PC-9 (cell line): ENCODE measurements at regions of chr12 and their contacts with region 1.

Region 1: GRCh38 chr12:89236748-89237388 is 115.4 kb downstream of the DUSP6 start:
- DNase-seq: peak; percentile 28 to 96
- H3K4me3 ChIP-seq: peak overlapping the region; percentile 26; the same call in 1 of the 2 replicates
- H3K27ac ChIP-seq: peak overlapping the region; percentile 87
- H3K4me1 ChIP-seq: peaks cover 37% of the 10 kb centered on the region
- H3K27me3 ChIP-seq: no peaks in the 10 kb centered on the region
- CTCF ChIP-seq: no peak

Region 2: GRCh38 chr12:89117448-89118034 is 119.3 kb before region 1 on chr12:
- CTCF ChIA-PET with region 1: no interaction called
- POLR2A ChIA-PET with region 1: interaction called, 10 read pairs
- intact Hi-C with region 1: loop called (anchors 1 kb)
- DNase-seq: peak; percentile 84 to 95
- H3K4me3 ChIP-seq: no peak overlapping the region
- H3K27ac ChIP-seq: peak overlapping the region; percentile 79
- H3K4me1 ChIP-seq: peaks cover 29% of the 10 kb centered on the region
- H3K27me3 ChIP-seq: no peaks in the 10 kb centered on the region
- CTCF ChIP-seq: no peak